ENCODE measurements at regions of chr2 and their contacts with region 1.

Region 1: DNA sequence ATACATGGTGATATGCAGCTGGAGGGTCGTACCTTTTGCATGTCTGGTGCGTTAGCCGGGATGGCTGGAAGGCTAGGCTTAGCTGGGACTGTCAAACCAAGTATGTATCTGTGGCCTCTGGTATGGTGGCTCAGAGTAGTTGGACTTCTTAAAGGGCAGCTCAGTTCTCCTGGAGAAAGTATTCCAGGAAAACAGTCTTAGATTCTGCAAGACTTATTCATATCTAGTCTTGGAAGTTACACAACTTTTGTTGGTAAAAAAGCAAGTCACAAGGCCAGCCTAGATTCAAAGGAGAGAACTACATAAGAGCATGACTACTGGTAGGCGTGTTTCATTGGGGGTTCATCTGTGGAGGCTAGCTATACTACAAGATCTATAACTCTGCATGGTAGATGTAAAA is 45.5 kb downstream of the EML4 start:
- DNase-seq: no peak
- ATAC-seq: no peak
- H3K4me3 ChIP-seq: no peak overlapping the region
- H3K4me3 Mint-ChIP-seq: peak overlapping the region in 3 of 10 donors; percentile 10 to 23 (median 12)
- H3K27ac ChIP-seq: no peak overlapping the region
- H3K27ac Mint-ChIP-seq: peak overlapping the region in 4 of 9 donors; percentile 16 to 60 (median 49)
- H3K4me1 ChIP-seq: peaks cover 15 to 28% of the 10 kb centered on the region in 2 donors
- H3K4me1 Mint-ChIP-seq: peaks cover 26 to 94% (median 76%) of the 10 kb centered on the region in 7 donors
- H3K27me3 ChIP-seq: no peaks in the 10 kb centered on the region
- H3K27me3 Mint-ChIP-seq: no peaks in the 10 kb centered on the region

Region 2: DNA sequence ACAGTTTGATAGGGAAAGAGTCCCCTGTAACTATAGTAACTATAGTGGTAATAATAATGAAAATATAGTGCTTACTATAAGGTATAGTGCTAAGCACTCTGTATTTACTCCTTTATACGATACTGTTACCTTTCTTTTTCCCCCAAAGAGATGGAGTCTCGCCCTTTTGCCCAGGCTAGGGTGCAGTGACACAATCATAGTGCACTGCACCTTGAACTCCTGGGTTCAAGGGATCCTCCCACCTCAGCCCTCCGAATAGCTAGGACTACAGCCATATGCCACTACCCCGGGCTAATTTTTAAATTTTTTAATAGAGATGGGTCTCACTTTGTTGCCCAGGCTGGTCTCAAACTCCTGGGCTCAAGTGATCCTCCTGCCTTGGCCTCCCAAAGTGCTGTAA is 10.9 kb before region 1 on chr2:
- CTCF ChIA-PET with region 1: interaction called, 5 read pairs
- POLR2A ChIA-PET with region 1: interaction called, 3 read pairs
- intact Hi-C with region 1: loop called in 1 of 2 experiments (anchors 2 kb)
- DNase-seq: no peak
- ATAC-seq: no peak
- H3K4me3 ChIP-seq: no peak overlapping the region
- H3K4me3 Mint-ChIP-seq: peak overlapping the region in 1 of 10 donors; percentile 41
- H3K27ac ChIP-seq: no peak overlapping the region
- H3K27ac Mint-ChIP-seq: peak overlapping the region in 3 of 9 donors; percentile 37 to 72 (median 48)
- H3K4me1 ChIP-seq: peaks cover 9 to 22% of the 10 kb centered on the region in 2 donors
- H3K4me1 Mint-ChIP-seq: peaks cover 23 to 86% (median 81%) of the 10 kb centered on the region in 7 donors
- H3K27me3 ChIP-seq: no peaks in the 10 kb centered on the region
- H3K27me3 Mint-ChIP-seq: no peaks in the 10 kb centered on the region